ENCODE measurements at regions of chr1 and their contacts with region 1.

Region 1: DNA sequence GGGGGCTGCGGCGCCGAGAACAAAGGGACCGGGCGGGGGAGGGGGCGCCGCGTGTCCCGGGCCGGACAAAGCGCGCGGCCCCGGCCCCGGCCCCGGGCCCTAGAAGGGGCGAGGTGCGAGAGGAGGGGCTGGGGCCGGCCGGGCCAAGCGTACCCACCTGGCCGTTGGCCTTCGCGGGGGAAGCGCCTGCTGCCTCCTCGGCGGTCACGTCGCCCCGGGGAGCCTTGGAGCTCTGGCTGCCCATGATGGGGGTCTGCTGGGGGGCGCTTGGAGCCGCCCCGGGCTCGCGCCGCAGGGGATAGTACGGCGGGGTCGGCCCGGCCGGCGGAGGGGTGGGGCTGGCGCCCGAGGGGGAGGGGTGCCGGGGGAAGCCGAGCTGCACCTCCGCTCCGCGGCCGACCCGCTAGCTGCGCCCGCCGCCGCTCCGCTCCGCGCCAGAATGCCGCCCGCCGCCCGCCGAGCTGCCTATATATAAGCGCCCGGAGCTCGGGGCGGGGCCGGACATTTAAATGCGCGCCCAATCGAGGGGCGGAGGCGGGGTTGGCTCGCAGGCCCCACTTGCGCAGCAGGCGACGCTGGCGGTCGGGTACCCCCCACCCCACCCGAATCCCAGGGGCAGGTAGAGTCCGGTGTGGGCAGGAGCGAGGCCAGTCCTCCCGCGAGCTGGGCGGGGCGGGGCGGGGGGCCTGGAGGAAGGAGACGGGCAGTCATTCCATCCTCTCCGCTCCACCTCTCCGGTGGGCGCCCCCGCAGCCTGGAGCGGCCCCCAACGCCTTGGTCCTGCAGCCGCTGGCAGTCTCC is at the start of gene MARCKSL1:
- DNase-seq: peak; percentile 85
- H3K4me3 ChIP-seq: peak within 1 kb of the TSS; percentile 99
- H3K27ac ChIP-seq: peak within 1 kb of the TSS; percentile 96
- H3K4me1 ChIP-seq: peaks cover 15% of the 10 kb centered on the region
- H3K27me3 ChIP-seq: no peaks in the 10 kb centered on the region
- CTCF ChIP-seq: no peak
- total RNA-seq, gene MARCKSL1: 425 and 445 TPM in 2 replicates

Region 2: DNA sequence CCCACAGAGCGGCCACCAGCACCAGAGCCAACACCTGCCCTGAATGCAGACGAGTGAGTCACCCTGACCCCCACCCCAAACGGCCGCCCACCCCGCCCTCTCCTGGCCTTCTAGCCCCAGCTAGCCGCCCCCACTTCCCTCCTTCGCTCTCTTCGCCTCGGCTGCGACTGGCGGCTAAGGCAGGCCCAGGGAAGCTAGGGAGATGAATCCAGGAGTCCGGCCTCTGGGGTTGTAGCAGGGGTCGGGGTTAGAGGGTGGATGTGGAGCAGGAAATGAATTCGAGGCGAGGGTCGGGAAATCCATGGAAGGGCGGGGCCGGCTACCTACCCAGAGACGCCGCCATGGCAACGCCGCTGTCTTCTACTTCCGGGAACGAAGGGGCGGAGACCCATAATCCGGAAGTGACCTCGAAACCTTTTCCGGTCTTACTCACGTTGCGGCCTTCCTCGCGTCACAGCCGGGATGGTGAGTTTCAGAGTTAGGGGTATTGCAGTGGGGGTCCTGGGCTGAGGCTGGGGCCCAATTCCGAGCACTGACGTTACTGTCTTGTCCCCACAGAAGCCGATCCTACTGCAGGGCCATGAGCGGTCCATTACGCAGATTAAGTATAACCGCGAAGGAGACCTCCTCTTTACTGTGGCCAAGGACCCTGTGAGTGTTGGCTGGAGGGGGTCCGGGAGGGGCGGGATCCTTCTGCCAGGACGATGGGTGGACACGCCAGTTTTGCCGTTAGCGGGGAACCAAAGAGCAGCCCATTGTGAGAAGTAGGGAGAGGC is 113.8 kb before region 1 on chr1 and contains the starts of genes EIF3I and TMEM234:
- CTCF ChIA-PET with region 1: no interaction called
- POLR2A ChIA-PET with region 1: no interaction called
- intact Hi-C with region 1: loop called (anchors 10 kb)
- DNase-seq: peak; percentile 95
- H3K4me3 ChIP-seq: peak within 1 kb of the TSS; percentile 85
- H3K27ac ChIP-seq: peak within 1 kb of the TSS; percentile 89
- H3K4me1 ChIP-seq: peaks cover 17% of the 10 kb centered on the region
- H3K27me3 ChIP-seq: no peaks in the 10 kb centered on the region
- CTCF ChIP-seq: no peak
- total RNA-seq, gene EIF3I: 298 and 303 TPM in 2 replicates
- total RNA-seq, gene TMEM234: 15.4 TPM in 2 replicates

Region 3: DNA sequence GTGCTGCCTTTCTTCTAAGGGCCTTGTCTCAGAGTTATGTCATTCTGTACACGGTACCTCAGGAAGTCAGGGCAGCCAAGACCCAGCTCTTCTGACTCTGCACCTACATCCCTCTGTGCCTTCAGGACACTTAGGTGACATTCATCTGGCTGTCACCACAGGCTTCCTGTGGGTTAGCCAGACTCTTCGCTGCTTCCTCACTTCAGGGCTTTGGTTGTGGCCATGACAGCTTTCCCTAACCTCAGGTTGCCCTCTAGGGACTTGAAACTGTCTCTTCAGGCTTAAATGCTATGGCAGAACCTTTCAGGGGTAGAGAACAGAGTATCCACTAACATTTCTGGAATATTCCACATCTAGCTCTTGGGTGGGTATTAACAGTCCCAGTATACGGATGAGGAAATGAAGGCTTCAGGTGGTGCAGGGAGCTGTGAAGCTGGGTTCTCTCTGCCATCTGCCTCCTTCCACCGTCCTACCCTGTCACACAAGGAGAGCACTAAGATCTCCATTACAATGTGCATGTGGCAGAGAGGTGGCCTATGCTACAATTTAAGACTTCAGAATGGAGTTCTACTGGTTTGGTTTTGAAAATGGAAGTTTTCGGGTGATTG is 36.3 kb after region 1 on chr1:
- CTCF ChIA-PET with region 1: no interaction called
- POLR2A ChIA-PET with region 1: no interaction called
- intact Hi-C with region 1: no loop called
- DNase-seq: no peak
- H3K4me3 ChIP-seq: no peak overlapping the region
- H3K27ac ChIP-seq: no peak overlapping the region
- H3K4me1 ChIP-seq: no peaks in the 10 kb centered on the region
- H3K27me3 ChIP-seq: no peaks in the 10 kb centered on the region
- CTCF ChIP-seq: no peak

Region 4: GRCh38 chr1:32394141-32394889 is 58.3 kb after region 1 on chr1 and contains the start of gene BSDC1:
- CTCF ChIA-PET with region 1: no interaction called
- POLR2A ChIA-PET with region 1: interaction called, 4 read pairs
- intact Hi-C with region 1: loop called (anchors 5 kb)
- DNase-seq: peak; percentile 98
- H3K4me3 ChIP-seq: peak within 1 kb of the TSS; percentile 70
- H3K27ac ChIP-seq: peak within 1 kb of the TSS; percentile 85
- H3K4me1 ChIP-seq: peaks cover 7% of the 10 kb centered on the region
- H3K27me3 ChIP-seq: no peaks in the 10 kb centered on the region
- CTCF ChIP-seq: no peak
- total RNA-seq, gene BSDC1: 47.4 and 48.0 TPM in 2 replicates

Region 5: DNA sequence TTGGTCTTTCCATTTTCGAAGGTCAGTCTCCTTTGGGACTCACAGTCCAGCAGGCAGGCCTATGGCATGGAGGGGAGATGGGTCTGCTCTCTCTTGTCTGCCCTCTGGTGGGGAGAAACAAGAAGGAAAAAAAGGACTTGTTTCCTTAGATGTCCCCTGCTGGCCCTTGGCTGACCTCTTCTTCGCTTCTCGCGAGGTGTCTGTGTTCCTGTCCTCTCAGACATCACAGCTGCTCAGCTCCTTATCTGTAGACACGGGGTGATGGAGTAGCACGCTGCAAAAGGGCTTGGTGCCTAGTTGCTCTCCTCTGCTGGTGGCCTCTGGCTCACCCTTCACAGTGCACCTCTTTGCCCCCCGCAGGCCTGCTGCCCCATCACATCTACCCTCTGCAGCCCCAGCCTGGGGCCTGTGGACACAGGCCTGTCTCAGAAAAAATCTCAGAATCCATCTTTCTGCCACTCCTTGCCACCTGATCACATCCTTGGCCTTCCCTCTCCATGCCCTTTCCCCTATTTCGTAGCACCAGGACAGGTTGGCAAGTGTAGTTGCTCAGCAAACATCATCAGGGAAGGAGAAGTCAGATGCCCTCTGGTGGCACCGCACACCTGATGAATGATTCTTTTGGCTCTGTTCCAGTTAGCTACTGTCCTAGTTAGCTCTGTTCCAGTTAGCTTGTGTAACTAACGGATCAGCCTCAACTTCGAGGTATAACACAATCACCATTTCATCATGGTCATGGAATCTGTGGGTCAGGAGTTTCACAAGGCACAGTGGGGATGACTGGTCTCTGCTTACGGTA is 719.4 kb after region 1 on chr1:
- CTCF ChIA-PET with region 1: no interaction called
- POLR2A ChIA-PET with region 1: no interaction called
- intact Hi-C with region 1: no loop called
- DNase-seq: peak; percentile 64
- H3K4me3 ChIP-seq: no peak overlapping the region
- H3K27ac ChIP-seq: no peak overlapping the region
- H3K4me1 ChIP-seq: no peaks in the 10 kb centered on the region
- H3K27me3 ChIP-seq: no peaks in the 10 kb centered on the region
- CTCF ChIP-seq: peak; percentile 66

Measured in A673 (cell line).